Activated CD8-positive, alpha-beta T cell treated with anti-CD3 and anti-CD28 coated beads, Interleukin-2, amount 10 ng/mL, durations not matched to agents 7 days and 5 days (primary cell): ENCODE measurements at regions of chr9 and their contacts with region 1.

Region 1: DNA sequence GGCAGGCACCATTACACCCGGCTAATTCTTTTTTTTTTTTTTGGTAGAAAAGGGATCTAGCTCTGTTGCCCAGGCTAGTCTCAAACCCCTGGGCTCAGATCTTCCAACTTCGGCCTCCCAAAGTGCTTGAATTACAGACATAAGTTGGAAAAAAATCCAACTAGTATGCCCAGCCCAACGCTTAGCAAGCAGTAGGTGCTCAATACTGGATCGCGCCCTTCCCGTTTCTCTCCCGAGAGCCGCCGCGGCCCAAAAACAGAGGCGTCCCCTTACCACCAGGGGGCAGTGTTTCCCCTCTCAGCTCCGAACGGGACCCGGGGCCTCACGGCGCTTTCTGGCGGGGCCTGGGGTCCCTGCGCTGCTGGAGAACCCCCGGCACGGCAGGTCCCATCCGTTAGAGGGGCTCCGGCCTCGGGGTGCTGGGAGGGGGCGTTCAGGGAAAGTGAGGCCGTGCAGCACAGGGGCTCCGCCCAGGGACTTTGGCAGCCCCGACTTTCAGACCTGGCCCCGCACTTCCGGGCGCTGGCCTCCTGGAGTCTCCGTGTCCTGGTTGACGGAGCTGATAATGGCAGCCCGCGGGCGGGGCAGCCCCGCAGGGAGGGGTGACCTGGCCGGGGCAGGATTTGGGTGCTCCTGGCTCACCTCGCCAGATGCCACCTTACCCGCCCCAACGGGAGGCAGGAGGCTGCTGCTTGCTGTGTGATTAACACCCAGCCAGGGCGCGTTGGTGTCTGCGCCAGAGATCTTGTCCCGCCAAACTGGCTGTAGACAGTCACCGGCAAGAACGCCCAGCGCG is 15.2 kb downstream of the PTGES start:
- DNase-seq: peak; percentile 90
- ATAC-seq: peak; percentile 94
- H3K4me3 Mint-ChIP-seq: peak overlapping the region; percentile 69
- H3K27ac Mint-ChIP-seq: peak overlapping the region; percentile 73
- H3K4me1 Mint-ChIP-seq: peaks cover 12% of the 10 kb centered on the region
- H3K27me3 Mint-ChIP-seq: no peaks in the 10 kb centered on the region

Region 2: DNA sequence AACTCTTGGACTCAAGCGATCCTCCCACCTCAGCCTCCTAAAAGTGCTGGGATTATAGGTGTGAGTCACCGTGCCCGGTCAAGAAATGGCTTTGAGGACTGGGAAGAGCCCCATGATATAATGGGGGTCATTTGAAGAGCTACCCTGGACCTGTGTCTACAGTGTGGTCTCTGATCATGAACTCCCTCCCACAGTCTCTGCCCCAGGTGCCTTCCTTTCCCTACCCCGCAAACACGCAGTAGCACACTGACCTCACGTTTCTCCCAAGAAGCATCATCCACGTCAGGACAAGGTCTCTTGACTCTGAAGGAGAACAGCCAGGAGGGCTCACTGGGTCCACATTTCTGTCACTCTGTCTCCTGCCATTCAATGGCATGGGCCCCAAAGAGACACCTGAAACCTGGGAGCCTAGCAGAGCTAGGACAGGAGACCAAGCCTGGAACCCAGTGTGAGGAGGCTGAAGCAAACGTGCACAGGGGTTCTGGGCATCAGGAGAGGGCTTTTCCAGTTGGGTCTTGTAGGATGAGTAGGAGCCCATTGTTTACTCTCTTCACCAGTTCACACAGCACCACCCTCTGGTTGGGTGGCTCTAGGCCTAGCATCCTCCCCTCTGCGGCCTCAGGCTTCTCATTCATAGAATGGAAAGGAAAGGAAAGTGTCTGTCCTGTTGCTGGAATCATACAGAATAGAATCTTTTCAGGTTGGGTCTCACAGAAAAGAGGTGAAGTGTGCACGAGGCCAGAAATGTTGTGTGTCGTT is 49.2 kb before region 1 on chr9:
- CTCF ChIA-PET with region 1: no interaction called
- POLR2A ChIA-PET with region 1: no interaction called
- DNase-seq: no peak
- ATAC-seq: no peak
- H3K4me3 Mint-ChIP-seq: no peak overlapping the region
- H3K27ac Mint-ChIP-seq: no peak overlapping the region
- H3K4me1 Mint-ChIP-seq: no peaks in the 10 kb centered on the region
- H3K27me3 Mint-ChIP-seq: peaks cover 4% of the 10 kb centered on the region

Region 3: DNA sequence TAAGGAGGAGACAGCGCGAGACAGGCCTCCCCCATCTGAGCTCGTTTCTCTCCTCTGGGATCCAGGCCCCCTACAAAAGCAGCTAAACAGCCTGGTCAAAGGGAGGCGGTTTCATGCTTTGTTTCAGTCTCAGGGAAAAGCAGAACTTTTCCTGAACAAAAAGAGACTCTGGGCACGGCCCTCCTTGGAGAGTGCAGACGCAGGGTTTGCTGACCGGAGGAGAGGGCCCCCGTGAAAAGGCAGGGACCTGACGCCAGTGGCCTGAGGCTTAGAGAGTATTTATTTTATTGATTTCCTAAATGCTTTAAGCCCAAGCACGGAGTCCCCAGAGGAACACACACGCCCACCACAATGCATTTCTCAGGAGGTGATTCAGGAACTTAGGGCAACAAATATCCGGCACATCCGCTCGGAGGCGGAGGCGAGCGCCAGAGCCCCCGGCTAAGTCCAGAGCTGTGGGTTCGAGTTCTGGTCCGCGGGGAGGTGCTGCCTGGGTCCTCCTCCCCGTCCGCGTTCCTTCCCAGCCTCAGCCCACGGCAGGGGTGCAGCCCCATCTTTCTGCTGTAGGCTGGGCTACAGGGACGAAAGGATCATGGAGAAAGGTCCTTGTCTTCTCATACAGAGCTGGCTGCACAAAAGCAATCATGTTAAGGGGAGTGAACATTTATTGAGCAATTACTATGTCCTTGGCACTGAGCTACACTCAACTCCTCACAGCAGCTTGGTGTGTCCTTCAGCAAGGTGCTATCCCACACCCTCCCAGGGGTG is 24.9 kb before region 1 on chr9:
- CTCF ChIA-PET with region 1: interaction called, 11 read pairs
- POLR2A ChIA-PET with region 1: no interaction called
- DNase-seq: no peak
- ATAC-seq: no peak
- H3K4me3 Mint-ChIP-seq: peak overlapping the region; percentile 74
- H3K27ac Mint-ChIP-seq: peak overlapping the region; percentile 83
- H3K4me1 Mint-ChIP-seq: peaks cover 32% of the 10 kb centered on the region
- H3K27me3 Mint-ChIP-seq: peaks cover 11% of the 10 kb centered on the region

Region 4: GRCh38 chr9:129726322-129727160 is 11.1 kb before region 1 on chr9:
- CTCF ChIA-PET with region 1: interaction called, 90 read pairs
- POLR2A ChIA-PET with region 1: interaction called, 4 read pairs
- DNase-seq: peak; percentile 69
- ATAC-seq: peak; percentile 94
- H3K4me3 Mint-ChIP-seq: no peak overlapping the region
- H3K27ac Mint-ChIP-seq: no peak overlapping the region
- H3K4me1 Mint-ChIP-seq: peaks cover 3% of the 10 kb centered on the region
- H3K27me3 Mint-ChIP-seq: peaks cover 17% of the 10 kb centered on the region

Region 5: DNA sequence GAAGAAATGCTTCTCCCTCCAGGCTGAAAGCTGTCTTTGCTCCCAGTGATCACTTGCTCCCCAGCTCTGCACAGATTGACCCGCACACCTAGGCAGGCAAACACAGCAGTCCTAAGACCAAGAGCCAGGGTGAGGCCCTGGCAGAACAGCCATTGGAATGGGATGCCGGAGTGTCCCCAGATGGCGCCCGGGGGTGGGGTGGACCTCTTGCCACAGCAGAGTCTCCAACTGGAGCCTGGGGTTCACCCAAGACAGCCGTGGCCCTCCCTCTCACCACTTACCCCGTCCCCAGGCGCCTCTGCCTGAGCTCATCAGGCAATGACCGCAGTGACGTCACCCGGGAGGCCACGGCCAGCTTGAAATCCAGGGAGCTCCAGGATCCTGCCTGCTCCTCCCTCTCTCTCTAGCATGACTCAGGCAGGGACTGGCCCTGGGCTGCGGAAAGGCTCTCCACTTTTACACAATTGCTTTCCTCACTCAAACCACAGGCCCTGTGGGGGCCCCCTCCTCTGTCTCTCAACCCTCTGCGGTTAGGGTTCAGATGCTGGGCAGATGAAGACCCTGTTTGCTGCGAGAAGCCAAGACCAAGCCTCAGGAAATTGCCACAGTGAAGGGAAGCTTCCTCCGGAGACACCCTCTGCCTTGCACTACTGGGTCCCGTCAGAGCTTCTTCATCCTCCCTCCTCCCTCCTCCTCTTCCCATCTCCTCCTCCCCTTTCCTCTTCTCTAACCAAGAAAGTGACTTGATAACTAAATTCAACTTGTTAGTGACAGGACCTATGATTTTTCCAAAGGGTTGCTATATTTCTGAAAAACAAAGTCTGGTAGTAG is 39.5 kb after region 1 on chr9:
- CTCF ChIA-PET with region 1: interaction called, 111 read pairs
- POLR2A ChIA-PET with region 1: interaction called, 3 read pairs
- DNase-seq: peak; percentile 68
- ATAC-seq: peak; percentile 72
- H3K4me3 Mint-ChIP-seq: peak overlapping the region; percentile 15
- H3K27ac Mint-ChIP-seq: no peak overlapping the region
- H3K4me1 Mint-ChIP-seq: peaks cover 17% of the 10 kb centered on the region
- H3K27me3 Mint-ChIP-seq: peaks cover 14% of the 10 kb centered on the region

Region 6: DNA sequence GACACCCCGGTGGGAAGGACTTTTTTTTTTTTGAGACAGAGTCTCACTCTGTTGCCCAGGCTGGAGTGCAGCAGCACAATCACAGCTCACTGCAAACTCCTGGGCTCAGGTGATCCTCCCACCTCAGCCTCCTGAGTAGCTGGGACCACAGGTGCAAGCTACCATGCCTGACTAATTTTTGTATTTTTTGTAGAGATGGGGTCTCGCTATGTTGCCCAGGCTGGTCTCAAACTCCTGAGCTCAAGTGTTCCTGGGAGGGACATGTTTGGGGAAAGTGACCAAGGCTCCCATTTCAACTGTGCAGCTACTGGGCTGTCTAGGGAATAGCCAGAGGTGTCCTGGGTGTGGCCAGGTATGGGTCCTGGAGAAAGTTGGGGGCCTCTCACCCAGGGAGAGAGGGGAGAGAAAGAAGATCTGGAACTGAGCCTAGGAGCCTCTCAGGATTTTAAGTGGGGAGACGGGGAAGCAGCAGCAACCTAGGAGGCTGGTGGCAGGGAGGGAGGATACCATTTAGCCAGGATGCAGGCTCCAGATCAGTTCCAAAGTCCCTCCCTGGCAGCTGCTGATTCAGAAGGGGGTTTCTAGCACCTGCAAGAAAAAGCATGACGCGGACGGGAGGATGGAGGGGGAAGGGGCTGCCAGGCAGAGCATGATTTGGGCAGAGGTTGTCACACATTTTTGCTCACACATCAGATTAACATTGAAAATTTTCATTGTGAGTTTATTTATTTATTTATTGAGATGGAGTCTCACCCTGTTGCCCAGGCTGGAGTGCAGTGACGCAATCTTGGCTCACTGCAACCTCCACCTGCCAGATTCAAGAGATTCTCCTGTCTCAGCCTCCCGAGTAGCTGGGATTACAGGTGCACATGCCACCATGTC is 58.6 kb after region 1 on chr9:
- CTCF ChIA-PET with region 1: interaction called, 10 read pairs
- POLR2A ChIA-PET with region 1: no interaction called
- DNase-seq: no peak
- ATAC-seq: no peak
- H3K4me3 Mint-ChIP-seq: no peak overlapping the region
- H3K27ac Mint-ChIP-seq: no peak overlapping the region
- H3K4me1 Mint-ChIP-seq: peaks cover 3% of the 10 kb centered on the region
- H3K27me3 Mint-ChIP-seq: peaks cover 5% of the 10 kb centered on the region